Posterior vena cava (tissue), 2 donors: ENCODE measurements at regions of chr7 and their contacts with region 1.

Region 1: GRCh38 chr7:134458806-134459698 is at the start of gene AKR1B1:
- DNase-seq: peak; percentile 98
- total RNA-seq, gene AKR1B1: 53.7 to 67.0 TPM

Region 2: GRCh38 chr7:134388336-134389019 is 70.6 kb before region 1 on chr7:
- intact Hi-C with region 1: no loop called
- DNase-seq: no peak

Region 3: GRCh38 chr7:134533288-134533771 is 74.3 kb after region 1 on chr7:
- intact Hi-C with region 1: no loop called
- DNase-seq: no peak

Region 4: GRCh38 chr7:134593530-134594392 is 134.7 kb after region 1 on chr7:
- intact Hi-C with region 1: loop called in 1 of 2 experiments (anchors 10 kb)
- DNase-seq: peak; percentile 91

Region 5: GRCh38 chr7:134845468-134845867 is 386.4 kb after region 1 on chr7:
- intact Hi-C with region 1: no loop called
- DNase-seq: no peak